Gastrocnemius medialis (tissue), 4 donors: ENCODE measurements at regions of chr16 and their contacts with region 1.

Region 1: GRCh38 chr16:58148526-58148925 is 19.3 kb upstream of the CFAP20 start:
- DNase-seq: no peak
- ATAC-seq: no peak
- H3K4me3 ChIP-seq: no peak overlapping the region
- H3K27ac ChIP-seq: no peak overlapping the region
- H3K4me1 ChIP-seq: no peaks in the 10 kb centered on the region
- H3K27me3 ChIP-seq: no peaks in the 10 kb centered on the region
- CTCF ChIP-seq: no peak
- POLR2A ChIP-seq: no peak

Region 2: DNA sequence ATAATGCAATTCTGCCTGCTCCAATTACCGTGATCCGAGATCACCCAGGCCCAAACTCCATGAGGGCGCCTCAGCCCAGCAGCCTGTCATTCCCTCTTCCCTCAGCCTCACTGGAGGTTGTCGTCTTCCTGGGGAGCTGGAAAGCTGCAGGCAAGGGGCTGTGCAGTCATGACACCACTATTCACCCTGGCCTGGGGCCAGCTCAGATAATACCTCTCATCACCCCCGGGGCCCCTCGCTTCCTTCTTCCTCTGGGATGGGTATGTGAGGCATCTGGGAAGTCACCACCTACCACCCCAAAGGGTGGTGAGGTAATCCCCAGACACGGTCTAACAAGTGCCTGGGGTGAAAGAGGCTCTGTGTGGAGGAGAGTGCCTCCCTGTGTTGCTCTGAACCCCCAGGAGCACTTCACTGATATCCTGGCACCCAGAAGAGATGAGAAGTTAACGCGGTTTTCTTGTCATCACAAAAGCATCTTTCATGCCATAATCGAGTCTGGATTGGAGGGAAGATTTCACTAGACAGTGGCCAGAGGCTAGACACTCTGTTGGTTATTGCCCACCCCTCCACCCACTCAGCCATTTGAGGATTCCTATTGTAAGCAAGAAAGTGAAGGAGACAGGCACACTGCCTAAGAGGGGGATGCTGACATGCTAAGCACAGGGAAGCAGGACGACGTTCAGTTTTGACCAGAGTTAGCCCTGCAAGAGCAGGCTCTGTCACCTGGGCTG is 37.8 kb before region 1 on chr16:
- in situ Hi-C with region 1: no loop called
- intact Hi-C with region 1: no loop called
- DNase-seq: no peak
- ATAC-seq: no peak
- H3K4me3 ChIP-seq: no peak overlapping the region
- H3K27ac ChIP-seq: no peak overlapping the region
- H3K4me1 ChIP-seq: peaks cover 0 to 4% of the 10 kb centered on the region in 2 donors
- H3K27me3 ChIP-seq: no peaks in the 10 kb centered on the region
- CTCF ChIP-seq: no peak
- POLR2A ChIP-seq: no peak

Region 3: DNA sequence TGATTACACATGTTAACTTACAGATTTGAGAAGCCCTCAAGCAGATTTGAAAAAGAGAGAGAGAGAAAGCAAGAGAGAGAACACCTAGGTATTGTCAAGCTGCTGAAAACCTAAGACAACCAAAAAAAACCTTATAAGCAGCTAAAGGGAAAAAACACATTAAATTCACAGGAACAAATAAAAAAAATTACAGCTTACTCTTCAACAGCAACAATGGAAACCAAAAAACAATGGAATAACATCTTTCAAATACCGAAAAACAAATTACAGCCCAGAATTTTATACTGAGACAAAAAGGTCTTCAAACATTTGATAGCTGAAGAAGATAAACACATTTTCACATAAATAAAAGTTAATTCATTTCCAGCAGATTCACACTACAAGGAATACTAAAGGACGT is 10.9 kb before region 1 on chr16:
- in situ Hi-C with region 1: no loop called
- intact Hi-C with region 1: no loop called
- DNase-seq: no peak
- ATAC-seq: no peak
- H3K4me3 ChIP-seq: no peak overlapping the region
- H3K27ac ChIP-seq: no peak overlapping the region
- H3K4me1 ChIP-seq: no peaks in the 10 kb centered on the region
- H3K27me3 ChIP-seq: no peaks in the 10 kb centered on the region
- CTCF ChIP-seq: no peak
- POLR2A ChIP-seq: no peak

Region 4: DNA sequence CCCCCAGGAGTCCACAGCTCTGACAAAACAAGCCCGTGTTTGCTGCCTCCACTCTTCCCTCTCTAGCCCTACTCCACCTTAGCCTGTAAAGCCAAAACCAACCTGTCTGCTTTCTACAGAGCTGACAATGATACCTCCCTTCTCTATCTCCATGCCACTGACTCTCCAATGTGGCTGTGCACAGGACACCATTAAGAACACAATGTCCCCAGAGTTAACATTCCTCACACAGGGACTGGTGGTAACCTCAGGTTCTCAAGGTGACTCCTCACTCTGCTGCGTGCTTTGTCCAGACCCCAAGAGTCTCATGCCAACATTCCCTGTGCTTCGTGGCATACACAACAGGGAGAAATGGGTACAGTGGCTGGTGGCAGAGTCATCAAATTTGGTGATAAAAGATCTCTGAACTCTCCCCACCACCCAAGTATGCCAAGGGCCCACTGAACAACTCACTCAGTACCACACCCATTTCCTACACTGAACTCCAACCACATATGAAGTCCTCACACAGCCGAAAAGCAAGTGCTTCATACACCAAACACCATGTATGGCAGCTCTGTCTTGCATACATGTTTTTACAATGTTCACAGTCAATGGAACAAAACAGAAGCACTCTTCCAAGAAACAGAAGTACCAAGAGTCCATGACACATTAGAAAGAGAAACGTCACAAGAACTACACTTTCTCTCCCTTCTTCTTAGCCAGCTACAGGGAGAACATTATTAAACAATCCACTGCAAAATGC is 28.3 kb after region 1 on chr16:
- in situ Hi-C with region 1: no loop called
- intact Hi-C with region 1: loop called (anchors 1 kb)
- DNase-seq: no peak
- ATAC-seq: no peak
- H3K4me3 ChIP-seq: no peak overlapping the region
- H3K27ac ChIP-seq: no peak overlapping the region
- H3K4me1 ChIP-seq: peaks cover 0 to 4% of the 10 kb centered on the region in 2 donors
- H3K27me3 ChIP-seq: no peaks in the 10 kb centered on the region
- CTCF ChIP-seq: no peak
- POLR2A ChIP-seq: no peak